ENCODE measurements at regions of chr5 and their contacts with region 1.

Region 1: GRCh38 chr5:144142139-144142823 is 28.2 kb downstream of the YIPF5 start:
- DNase-seq: no peak
- H3K4me3 ChIP-seq: no peak overlapping the region
- H3K27ac ChIP-seq: no peak overlapping the region
- H3K4me1 ChIP-seq: 0 out of 7 replicates have a peak, but pooled peaks cover 0 to 2% (median 0%) of the 10 kb centered on the region in 4 experiments
- H3K27me3 ChIP-seq: no peaks in the 10 kb centered on the region
- CTCF ChIP-seq: peak in 2 of 3 experiments; percentile 53 to 70; a peak in 3 of 4 replicates
- EP300 ChIP-seq: no peak
- POLR2A ChIP-seq: no peak
- RAD21 ChIP-seq: peak; percentile 81 to 83

Region 2: GRCh38 chr5:143968011-143968878 is 174.0 kb before region 1 on chr5:
- CTCF ChIA-PET with region 1: interaction called, 11 read pairs
- POLR2A ChIA-PET with region 1: no interaction called
- DNase-seq: no peak
- H3K4me3 ChIP-seq: no peak overlapping the region
- H3K27ac ChIP-seq: no peak overlapping the region
- H3K4me1 ChIP-seq: no peaks in the 10 kb centered on the region
- H3K27me3 ChIP-seq: no peaks in the 10 kb centered on the region
- CTCF ChIP-seq: peak in 2 of 3 experiments; percentile 21 to 61; a peak in 2 of 4 replicates
- EP300 ChIP-seq: no peak
- POLR2A ChIP-seq: no peak
- RAD21 ChIP-seq: peak; percentile 68 to 71

Region 3: GRCh38 chr5:144125163-144125726 is 17.0 kb before region 1 on chr5:
- CTCF ChIA-PET with region 1: interaction called, 15 read pairs
- POLR2A ChIA-PET with region 1: no interaction called
- DNase-seq: no peak
- H3K4me3 ChIP-seq: no peak overlapping the region
- H3K27ac ChIP-seq: no peak overlapping the region
- H3K4me1 ChIP-seq: peaks cover 2 to 4% (median 3%) of the 10 kb centered on the region in 4 experiments; a peak in 3 of 7 replicates
- H3K27me3 ChIP-seq: no peaks in the 10 kb centered on the region
- CTCF ChIP-seq: no peak
- EP300 ChIP-seq: no peak
- POLR2A ChIP-seq: no peak
- RAD21 ChIP-seq: no peak

Region 4: DNA sequence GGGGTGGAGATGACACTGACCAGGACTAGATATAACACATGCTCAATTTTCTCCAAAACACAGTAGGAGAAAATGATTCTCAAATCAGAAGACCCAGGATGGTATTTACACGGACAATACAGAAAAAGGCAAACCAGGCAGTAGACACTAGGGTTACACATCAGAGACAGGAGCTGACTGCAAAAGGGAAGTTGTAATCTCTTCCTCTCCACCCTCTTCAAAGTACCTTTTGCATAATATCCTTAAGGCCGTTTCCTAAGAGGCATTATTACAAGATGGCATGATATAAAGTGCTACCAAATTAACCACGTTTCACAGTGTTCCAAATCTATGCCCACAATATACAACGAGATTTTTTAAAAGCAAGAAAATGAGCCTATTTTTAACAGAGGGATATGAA is 11.0 kb before region 1 on chr5:
- CTCF ChIA-PET with region 1: interaction called, 15 read pairs
- POLR2A ChIA-PET with region 1: no interaction called
- DNase-seq: no peak
- H3K4me3 ChIP-seq: no peak overlapping the region
- H3K27ac ChIP-seq: no peak overlapping the region
- H3K4me1 ChIP-seq: no peaks in the 10 kb centered on the region
- H3K27me3 ChIP-seq: no peaks in the 10 kb centered on the region
- CTCF ChIP-seq: no peak
- EP300 ChIP-seq: no peak
- POLR2A ChIP-seq: no peak
- RAD21 ChIP-seq: no peak

Region 5: DNA sequence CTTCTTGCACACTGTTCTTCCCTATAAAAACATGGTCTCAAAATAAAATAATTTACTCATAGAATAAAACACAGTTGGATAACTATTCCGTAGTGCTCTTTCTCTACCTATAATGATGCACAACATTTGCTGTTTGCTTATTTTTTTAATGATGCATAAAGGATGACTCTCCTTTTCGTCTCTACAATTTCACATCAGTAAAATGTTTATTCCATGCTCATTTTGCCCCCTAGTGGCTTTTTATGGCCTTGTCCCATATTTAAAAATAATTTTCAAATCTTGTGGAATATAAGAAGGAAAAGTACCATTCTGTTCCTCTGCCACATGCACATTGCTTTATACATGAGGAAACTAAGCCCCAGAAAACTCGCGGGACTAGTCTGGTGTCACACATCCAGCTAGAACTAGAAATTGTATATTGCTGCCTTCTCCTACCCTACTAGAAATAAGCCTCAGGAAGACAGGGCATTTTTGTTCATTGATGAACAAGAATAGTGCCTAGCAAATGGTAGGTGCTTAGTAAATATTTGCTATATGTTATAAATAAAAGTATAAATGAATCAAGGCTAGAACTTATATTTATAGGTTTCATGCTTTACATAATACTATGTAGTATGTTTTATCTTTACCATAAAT is 41.1 kb after region 1 on chr5:
- CTCF ChIA-PET with region 1: no interaction called
- POLR2A ChIA-PET with region 1: no interaction called
- DNase-seq: no peak
- H3K4me3 ChIP-seq: no peak overlapping the region
- H3K27ac ChIP-seq: no peak overlapping the region
- H3K4me1 ChIP-seq: no peaks in the 10 kb centered on the region
- H3K27me3 ChIP-seq: no peaks in the 10 kb centered on the region
- CTCF ChIP-seq: peak in 1 of 3 experiments; percentile 47; a peak in 2 of 4 replicates
- EP300 ChIP-seq: no peak
- POLR2A ChIP-seq: no peak
- RAD21 ChIP-seq: peak in 1 of 2 experiments; percentile 28; a peak in 2 of 4 replicates

Region 6: DNA sequence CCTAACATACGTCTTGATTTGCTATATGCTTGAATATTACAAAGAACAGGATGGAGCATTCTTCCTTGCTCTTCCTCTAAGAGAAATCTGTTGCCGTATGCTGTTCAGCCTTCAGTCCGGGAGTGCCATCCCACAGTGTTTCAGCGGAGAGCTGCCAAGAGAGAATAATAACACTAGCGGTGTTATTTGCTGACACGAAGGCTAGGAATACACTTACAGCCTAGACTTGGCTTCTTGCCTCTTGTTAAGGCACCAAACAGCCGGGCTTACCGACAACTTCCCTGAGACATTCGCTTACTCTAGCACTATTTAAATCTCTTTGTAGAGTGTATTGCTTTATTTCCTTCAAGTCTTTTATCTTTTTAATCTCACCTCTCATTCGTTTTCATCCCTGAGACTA is 59.8 kb after region 1 on chr5:
- CTCF ChIA-PET with region 1: no interaction called
- POLR2A ChIA-PET with region 1: no interaction called
- DNase-seq: no peak
- H3K4me3 ChIP-seq: no peak overlapping the region
- H3K27ac ChIP-seq: no peak overlapping the region
- H3K4me1 ChIP-seq: peaks cover 0 to 3% (median 0%) of the 10 kb centered on the region in 4 experiments; a peak in 2 of 7 replicates
- H3K27me3 ChIP-seq: peaks cover 0 to 10% (median 4%) of the 10 kb centered on the region in 4 experiments; a peak in 3 of 7 replicates
- CTCF ChIP-seq: no peak
- EP300 ChIP-seq: no peak
- POLR2A ChIP-seq: no peak
- RAD21 ChIP-seq: no peak